GM10248 (cell line): ENCODE measurements at regions of chr5 and their contacts with region 1.

Region 1: GRCh38 chr5:81105261-81105877 is 127.8 kb upstream of the CKMT2 start:
- DNase-seq: no peak
- CTCF ChIP-seq: no peak

Region 2: GRCh38 chr5:80686757-80687156 is 418.6 kb before region 1 on chr5:
- CTCF ChIA-PET with region 1: interaction called, 22 read pairs
- POLR2A ChIA-PET with region 1: no interaction called
- DNase-seq: no peak
- CTCF ChIP-seq: peak; percentile 24

Region 3: DNA sequence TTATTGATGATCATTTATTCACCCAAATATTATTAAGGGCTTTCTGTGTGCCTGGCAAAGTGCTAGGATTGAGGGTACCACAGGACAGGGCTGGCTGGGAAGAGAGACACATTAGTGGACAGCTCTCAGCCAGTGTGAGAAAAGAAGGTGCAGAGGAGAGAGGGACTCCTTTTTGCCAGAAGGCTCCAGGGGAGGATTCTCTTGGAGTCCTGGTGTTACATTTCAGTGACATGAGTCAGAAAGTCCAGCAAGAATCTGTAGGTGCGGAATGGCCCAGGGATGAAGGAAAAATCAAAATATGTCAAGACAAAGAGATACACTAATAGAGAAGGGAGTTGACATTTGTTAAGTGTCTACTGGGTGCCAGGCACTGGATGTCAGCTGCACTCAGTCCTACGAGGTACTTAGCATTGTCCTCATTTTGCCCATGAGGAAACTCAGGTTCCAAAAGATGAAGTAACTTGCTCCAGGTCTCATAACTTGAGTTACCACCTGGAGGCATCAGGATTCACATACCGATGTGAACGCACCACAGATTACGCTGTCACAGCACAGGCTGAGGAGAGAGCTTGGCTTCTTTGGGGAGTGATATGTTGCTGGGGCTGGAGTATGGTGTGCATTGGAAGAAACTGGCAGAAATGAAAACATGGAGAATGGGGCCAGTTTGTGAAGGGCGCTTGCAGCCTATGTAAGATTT is 84.7 kb before region 1 on chr5:
- CTCF ChIA-PET with region 1: no interaction called
- POLR2A ChIA-PET with region 1: no interaction called
- DNase-seq: no peak
- CTCF ChIP-seq: no peak

Region 4: DNA sequence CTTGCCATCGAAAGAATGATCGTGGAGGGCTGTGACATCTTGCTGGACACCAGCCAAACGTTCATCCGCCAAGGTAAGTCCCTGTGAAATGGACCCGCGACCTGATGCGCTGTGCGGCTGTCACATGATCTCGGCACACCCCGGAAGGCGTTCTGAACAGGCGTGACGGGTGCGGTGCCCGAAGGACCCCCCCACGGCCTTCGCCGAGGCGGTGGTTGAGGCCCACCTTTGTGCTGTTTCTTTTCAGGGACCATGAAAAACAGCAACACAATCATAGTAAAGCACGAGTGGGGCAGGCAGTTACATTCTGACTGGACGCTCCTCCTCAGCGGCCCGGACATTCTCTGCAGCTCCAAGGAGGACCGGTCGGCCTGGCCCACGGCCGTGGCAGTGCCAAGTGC is 18.5 kb before region 1 on chr5:
- CTCF ChIA-PET with region 1: interaction called, 27 read pairs
- POLR2A ChIA-PET with region 1: no interaction called
- DNase-seq: no peak
- CTCF ChIP-seq: no peak

Region 5: DNA sequence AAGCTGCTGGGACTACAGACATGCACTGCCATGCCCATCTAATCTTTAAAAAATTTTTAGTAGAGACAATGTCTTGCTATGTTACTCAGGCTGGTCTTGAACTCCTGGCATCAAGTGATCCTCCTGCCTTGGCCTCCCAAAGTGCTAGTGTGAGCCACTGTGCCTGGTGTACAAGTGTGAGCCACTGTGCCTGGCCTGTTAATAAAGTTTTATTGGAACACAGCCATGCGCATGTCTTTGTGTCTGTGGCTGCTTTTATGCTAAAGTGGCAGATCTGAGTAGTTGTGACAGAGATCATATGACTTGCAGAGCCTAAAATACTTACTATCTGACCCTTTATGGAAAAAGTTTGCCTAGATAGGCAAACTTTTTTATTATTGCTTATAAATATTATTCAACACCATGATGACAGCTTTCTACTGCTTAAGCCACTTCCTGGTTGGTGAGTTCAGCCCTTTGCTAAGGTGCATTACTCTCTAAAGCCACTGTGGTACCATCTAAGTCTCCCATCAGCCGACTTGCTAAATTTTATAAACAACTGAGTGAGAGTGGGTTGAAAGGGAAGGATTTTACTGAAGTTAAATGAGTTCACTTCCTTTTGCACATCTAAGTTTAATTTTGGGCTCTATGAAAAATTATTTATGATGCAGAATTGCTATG is 11.7 kb before region 1 on chr5:
- CTCF ChIA-PET with region 1: interaction called, 27 read pairs
- POLR2A ChIA-PET with region 1: no interaction called
- DNase-seq: no peak
- CTCF ChIP-seq: no peak

Region 6: GRCh38 chr5:81121836-81122630 is 16.7 kb after region 1 on chr5:
- CTCF ChIA-PET with region 1: interaction called, 14 read pairs
- POLR2A ChIA-PET with region 1: no interaction called
- DNase-seq: no peak
- CTCF ChIP-seq: no peak

Region 7: GRCh38 chr5:81128416-81128815 is 23.0 kb after region 1 on chr5:
- CTCF ChIA-PET with region 1: interaction called, 14 read pairs
- POLR2A ChIA-PET with region 1: no interaction called
- DNase-seq: no peak
- CTCF ChIP-seq: no peak

Region 8: DNA sequence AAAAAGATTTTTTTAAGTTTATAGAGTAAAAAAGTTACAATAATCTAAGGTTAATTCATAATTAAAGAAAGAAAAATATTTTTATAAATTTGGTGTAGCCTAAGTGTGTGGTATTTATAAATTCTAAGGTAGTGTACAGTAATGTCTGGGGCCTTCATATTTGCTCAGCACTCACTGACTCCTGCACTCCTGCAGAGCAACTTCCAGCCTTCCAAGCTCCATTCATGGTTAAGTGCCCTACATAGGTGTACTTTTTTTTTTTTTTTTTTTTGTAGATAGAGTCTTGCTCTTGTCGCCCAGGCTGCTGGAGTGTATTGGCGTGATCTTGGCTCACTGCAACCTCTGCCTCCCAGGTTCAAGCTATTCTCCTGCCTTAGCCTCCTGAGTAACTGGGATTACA is 278.5 kb after region 1 on chr5:
- CTCF ChIA-PET with region 1: no interaction called
- POLR2A ChIA-PET with region 1: no interaction called
- DNase-seq: no peak
- CTCF ChIP-seq: no peak